Cardiac septum (tissue), 1 donor: ENCODE measurements at regions of chr16 and their contacts with region 1.

Region 1: GRCh38 chr16:31507929-31508705 is at the start of gene RUSF1:
- DNase-seq: peak; percentile 98
- total RNA-seq, gene RUSF1: 32.6 TPM

Region 2: GRCh38 chr16:31474173-31474714 is 33.9 kb before region 1 on chr16:
- intact Hi-C with region 1: loop called (anchors 2 kb)
- DNase-seq: no peak

Region 3: DNA sequence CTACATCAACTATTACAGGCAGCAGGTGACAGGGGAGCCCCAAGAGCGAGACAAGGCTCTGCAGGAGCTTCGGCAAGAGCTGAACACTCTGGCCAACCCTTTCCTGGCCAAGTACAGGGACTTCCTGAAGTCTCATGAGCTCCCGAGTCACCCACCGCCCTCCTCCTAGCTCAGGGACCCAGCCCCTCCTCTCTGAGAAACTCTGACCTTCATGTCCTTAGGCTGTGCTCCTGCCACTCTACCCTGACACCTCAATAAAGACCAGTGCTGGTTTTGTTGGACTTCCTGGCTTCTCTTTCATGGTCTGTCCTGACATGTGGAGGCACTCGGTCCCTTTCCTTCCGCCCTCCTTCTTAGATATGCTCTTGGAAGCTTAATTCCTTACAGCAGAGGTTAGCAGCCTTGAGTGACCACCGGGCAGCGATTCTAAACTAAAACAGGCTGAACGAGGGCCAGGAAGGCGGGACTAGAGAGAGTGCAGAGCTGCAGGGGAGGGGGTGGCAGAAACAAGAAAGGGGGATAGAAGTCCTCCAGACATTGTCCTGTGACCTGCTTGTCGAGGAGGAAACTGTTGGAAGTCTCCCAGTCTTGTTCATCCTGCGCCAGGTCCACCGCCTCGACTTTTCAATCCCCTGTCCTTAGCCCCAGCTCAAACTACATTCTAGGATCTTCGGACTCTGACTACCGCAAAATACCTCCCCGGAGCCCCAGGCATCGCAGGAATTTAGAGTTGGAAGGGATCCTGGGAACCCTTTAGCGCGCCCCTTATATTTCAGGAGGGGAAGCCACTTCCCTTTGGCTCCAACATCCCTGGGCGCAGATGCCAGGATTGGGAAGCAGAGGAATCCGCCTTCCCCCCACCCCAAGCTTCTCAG is 20.6 kb after region 1 on chr16:
- intact Hi-C with region 1: no loop called
- DNase-seq: no peak

Region 4: GRCh38 chr16:31700526-31701388 is 192.6 kb after region 1 on chr16:
- intact Hi-C with region 1: loop called (anchors 10 kb)
- DNase-seq: peak; percentile 88